Cardiac septum (tissue), 1 donor: ENCODE measurements at regions of chr2 and their contacts with region 1.

Region 1: GRCh38 chr2:70086838-70087701 is at the start of gene PCBP1:
- DNase-seq: peak; percentile 96
- total RNA-seq, gene PCBP1: 223 TPM

Region 2: DNA sequence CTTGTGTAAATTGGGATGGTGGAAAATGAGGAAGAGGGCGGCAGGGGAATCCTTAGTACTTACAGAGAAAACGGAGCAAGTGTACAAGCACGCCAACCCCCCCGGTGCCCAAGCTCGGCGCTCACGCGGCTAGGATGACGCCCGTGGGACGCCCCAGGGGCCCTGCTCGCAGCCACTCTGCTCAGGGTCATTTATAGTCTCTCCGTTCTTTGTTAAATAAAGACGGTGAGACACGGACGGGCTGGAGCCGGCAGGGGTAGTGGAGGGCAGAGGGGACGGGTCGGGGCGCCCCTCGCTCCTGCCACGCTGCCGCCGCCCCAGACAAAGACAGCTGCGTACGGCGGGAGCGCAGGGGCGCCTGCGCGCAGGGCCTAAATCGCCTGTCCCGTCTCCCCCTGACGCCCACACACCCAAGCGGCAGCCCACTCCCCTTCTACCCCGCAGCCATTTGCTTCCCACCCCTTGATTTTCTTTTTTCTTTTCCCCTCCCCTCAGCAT is 38.0 kb after region 1 on chr2:
- intact Hi-C with region 1: loop called (anchors 1 kb)
- DNase-seq: peak; percentile 88

Region 3: DNA sequence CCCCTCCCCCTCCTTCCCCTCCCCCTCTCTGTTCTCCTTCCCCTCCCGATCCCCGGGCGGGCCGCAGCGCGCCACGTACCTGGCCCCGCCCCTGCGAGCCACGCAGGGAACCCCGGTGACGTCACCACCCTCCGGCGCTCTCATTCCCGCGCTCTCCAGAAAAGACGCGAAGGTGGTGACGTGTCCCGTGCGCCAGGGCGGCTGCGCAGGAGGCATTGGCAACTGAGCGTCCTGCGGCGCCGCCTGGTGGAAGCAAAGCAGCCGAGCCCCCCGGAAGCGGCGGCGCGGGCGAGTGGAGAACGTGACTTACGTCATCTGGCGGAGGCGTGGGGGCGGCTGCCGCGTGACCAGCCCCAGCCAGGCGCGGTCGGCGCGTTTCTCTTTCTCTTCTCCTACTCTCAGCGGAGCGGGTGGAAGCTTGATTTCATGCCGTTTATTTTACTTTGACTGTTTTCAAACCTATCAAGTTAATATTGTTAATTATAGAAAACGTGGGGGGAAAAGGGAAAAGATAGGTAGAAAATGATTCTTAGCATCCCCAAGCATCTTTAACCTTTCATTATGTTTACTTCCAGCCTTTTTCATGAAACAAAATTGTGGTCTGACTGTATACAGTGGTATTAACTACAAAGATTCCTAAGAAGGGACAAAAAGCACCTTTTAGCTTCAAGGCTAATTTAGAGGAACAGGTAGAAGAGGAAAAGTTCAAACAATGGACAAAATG is 55.7 kb after region 1 on chr2:
- intact Hi-C with region 1: loop called (anchors 1 kb)
- DNase-seq: peak; percentile 99

Region 4: DNA sequence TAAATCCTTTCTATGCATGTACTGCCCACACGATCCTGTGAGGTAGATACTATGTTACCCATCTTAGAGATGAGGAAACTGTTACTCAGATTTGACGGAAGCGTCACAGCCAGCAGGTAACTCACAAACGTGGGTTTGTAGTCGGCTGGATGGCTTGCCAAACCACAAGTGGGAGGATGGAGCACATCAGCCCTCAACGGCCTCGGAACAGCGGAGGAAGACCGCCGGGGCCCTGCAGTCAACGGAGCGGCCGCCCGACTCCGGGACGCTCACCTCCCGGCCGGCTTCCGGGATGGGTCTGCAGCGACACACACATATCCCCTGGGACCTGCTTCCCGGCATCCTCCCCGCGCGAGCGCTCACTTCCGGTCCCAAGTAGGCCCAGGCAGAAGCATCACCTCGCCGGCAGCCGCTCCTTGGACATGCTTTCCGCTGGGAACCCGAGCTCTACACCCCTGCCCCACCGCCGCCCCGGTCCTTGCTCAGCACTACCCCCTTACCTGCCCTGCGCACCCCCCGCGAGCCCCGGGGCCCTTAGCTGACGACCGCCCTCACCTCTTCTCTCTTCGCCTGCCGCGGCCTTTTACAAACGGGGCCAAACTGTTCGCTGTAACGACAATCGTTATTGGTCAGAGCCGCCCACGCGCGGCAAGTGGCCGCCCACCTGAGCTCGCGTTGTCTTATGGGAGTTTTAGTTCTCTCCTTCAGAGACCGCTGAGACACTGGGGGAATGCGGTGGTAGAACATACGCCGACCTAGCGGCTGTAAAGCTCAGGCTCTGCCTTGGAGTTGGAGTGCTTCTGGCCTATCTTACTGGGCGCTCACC is 103.6 kb after region 1 on chr2 and contains the start of gene C2orf42:
- intact Hi-C with region 1: loop called (anchors 5 kb)
- DNase-seq: peak; percentile 96
- total RNA-seq, gene C2orf42: 12.3 TPM

Region 5: DNA sequence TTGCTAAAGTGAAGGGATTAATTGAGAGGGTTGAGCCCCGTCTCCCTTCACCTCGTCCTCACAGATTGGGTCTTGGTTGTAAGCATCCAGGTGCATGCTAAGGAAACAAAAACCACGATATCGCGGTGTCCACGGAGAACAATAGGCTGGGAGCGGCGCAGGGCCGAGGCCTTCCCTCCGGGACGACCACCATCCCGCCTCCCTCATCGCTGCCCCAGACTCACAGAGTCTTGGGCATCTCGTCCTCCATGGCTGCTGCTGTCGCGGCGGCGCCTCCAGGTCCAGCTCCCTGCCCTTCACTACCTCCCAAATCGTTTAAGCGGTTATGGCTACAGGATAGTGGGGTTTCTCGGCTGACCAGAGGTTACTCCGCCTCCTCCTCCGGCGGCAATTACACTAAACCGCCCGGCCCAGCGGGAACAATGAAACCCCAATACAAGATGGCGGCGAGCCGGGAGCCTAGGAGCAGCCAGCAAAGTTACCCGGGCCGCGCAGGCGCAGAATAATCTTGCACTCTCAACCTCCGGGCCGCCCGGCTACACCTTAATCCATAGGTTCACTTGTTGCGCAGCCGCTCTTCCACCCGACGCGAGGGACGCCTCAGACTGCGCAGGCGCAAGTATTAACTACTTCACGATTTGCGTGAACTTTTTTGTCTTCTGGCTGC is 161.2 kb after region 1 on chr2 and contains the start of gene TIA1:
- intact Hi-C with region 1: loop called (anchors 1 kb)
- DNase-seq: peak; percentile 99
- total RNA-seq, gene TIA1: 49.4 TPM